Sigmoid colon (tissue), 7 donors: ENCODE measurements at regions of chr15 and their contacts with region 1.

Region 1: GRCh38 chr15:53693729-53694475 is 65.6 kb downstream of the WDR72 start:
- DNase-seq: peak; percentile 77
- H3K4me3 ChIP-seq: no peak overlapping the region
- H3K27ac ChIP-seq: no peak overlapping the region
- H3K4me1 ChIP-seq: peaks cover 0 to 13% (median 4%) of the 10 kb centered on the region in 4 donors
- H3K27me3 ChIP-seq: no peaks in the 10 kb centered on the region
- CTCF ChIP-seq: no peak
- EP300 ChIP-seq: no peak
- POLR2A ChIP-seq: no peak

Region 2: DNA sequence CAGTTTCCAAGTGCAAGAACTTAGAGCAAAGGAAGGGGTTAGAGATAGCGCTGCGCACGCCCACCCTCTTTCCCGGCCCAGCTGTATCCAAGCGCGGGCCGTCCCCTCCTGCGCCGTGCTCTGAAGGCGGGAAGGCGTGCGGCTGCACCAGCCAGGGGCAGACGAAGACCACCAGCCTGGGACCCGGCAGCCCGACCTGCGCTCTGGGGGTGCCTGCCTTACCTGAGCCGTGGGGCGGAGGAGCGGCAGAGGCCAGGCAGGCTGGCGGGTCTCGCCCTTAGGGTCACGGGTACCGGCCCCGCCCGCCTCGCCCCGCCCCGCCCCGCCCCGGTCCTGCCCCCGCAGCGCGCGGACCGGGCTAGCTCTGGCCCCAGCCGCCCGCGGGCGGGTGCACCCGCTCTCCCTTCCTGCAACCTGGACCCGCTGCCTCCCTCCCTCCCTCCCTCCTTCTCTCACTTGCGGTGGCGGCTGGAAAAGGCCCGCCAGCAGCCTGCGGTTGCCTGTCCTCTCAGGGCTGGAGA is 65.6 kb after region 1 on chr15 and contains the start of gene WDR72:
- intact Hi-C with region 1: loop called (anchors 10 kb)
- DNase-seq: no peak
- H3K4me3 ChIP-seq: peak within 1 kb of the TSS in 3 of 4 donors; percentile 16 to 38 (median 35)
- H3K27ac ChIP-seq: no peak within 1 kb of the TSS
- H3K4me1 ChIP-seq: peaks cover 0 to 6% (median 3%) of the 10 kb centered on the region in 4 donors
- H3K27me3 ChIP-seq: peaks cover 8 to 30% (median 18%) of the 10 kb centered on the region in 3 donors
- CTCF ChIP-seq: no peak
- EP300 ChIP-seq: no peak
- POLR2A ChIP-seq: no peak
- total RNA-seq, gene WDR72: under 0.01 to 0.28 (median 0.16) TPM in 3 of 4 donors, not detected in the other

Region 3: GRCh38 chr15:53811530-53811929 is 117.6 kb after region 1 on chr15:
- intact Hi-C with region 1: loop called (anchors 10 kb)
- DNase-seq: no peak
- H3K4me3 ChIP-seq: no peak overlapping the region
- H3K27ac ChIP-seq: no peak overlapping the region
- H3K4me1 ChIP-seq: no peaks in the 10 kb centered on the region
- H3K27me3 ChIP-seq: no peaks in the 10 kb centered on the region
- CTCF ChIP-seq: no peak
- EP300 ChIP-seq: no peak
- POLR2A ChIP-seq: no peak